Heart left ventricle (tissue), 16 donors: ENCODE measurements at regions of chr2 and their contacts with region 1.

Region 1: DNA sequence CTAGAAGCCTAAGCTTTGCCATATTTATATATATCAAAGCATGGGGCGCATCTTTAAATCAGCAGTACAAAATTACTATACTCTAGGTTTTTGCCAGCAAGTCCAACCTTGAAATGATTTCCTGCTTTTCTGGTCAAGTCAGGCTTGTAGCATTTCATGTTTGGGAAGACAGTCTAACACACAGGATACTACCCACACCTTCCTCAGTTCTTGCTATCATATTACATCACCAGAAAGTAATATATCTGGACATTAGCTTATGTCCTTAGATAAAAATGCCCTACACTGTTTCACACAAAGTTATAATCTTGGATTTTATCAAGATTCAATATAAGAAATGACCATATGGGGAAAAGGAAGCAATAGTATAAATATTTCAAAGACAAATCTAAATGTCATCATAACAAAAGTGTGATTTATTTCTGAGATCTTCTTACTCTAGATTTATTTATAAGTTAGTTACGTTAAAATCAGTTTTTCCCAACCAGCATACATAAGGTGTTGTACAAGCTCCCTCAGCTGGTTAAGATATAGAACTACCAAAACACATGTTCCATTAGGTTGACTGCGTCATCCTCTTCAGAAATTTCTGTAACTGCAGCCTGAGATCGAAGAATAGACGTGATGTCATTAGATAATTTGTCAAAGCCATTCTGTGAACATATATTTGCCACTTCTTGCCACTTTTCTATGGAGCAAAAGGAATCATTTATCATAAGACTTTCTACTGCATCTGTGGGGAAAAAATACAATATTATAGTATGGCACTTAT is 56.7 kb downstream of the CLHC1 start:
- DNase-seq: no peak
- ATAC-seq: peak; percentile 55 to 83 (median 66)
- H3K4me3 ChIP-seq: no peak overlapping the region
- H3K27ac ChIP-seq: no peak overlapping the region
- H3K4me1 ChIP-seq: peaks cover 0 to 8% (median 0%) of the 10 kb centered on the region in 12 donors
- H3K27me3 ChIP-seq: no peaks in the 10 kb centered on the region
- CTCF ChIP-seq: peak; percentile 35 to 75 (median 64)
- POLR2A ChIP-seq: no peak

Region 2: DNA sequence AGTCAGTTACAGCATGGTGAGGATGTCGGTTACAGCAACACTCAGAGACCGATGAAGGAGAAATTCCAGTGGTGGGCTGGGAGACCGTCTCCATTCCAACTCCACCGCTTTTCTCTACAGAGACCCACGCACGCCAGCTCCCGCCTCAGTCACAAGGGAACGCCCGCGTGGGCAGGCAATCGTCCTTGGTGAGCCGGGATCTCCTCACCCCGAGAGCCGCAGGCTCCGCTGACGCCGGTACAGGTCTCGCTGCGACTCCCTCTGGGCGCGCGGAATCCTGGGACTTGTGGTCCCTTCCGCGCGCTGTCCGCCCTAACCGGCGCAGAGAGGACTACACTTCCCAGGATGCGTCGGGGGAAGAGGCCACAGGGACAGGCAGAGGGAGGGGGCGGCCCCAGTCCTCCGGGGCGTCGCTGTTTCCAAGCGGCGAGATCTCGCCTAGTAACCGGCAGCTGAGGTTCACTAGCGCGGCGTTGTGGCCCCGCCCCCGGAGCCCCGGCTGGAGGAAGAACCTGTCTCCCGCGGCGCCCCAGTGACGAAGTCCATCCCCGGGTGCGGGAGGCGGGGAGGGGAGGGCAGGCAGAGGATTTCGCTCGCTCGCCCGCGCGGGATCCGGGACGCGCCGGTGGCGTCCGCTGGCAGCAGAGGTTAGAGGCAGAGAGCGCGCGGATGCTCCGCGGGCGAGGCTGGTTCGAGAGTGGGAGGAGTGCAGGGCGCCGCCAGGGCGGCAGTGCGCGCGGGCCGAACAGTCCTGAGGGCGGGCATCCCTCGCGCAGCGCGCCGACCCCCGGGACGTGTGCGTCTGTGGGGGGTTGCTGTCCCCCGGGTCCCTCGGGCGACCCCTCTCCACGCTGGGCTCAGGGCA is 452.1 kb before region 1 on chr2 and contains the start of gene EML6:
- intact Hi-C with region 1: loop called in 2 of 10 experiments (anchors 10 kb)
- DNase-seq: peak; percentile 98 to 99 (median 98)
- ATAC-seq: peak; percentile 100
- H3K4me3 ChIP-seq: peak within 1 kb of the TSS; percentile 45 to 89 (median 73)
- H3K27ac ChIP-seq: peak within 1 kb of the TSS in 11 of 12 donors; percentile 32 to 82 (median 76)
- H3K4me1 ChIP-seq: peaks cover 0 to 26% (median 9%) of the 10 kb centered on the region in 12 donors
- H3K27me3 ChIP-seq: peaks cover 0 to 18% (median 0%) of the 10 kb centered on the region in 9 donors
- CTCF ChIP-seq: peak in 7 of 12 donors; percentile 7 to 48 (median 24)
- POLR2A ChIP-seq: peak in 1 of 2 donors; percentile 82
- total RNA-seq, gene EML6: 0.08 to 1.2 (median 0.58) TPM

Region 3: GRCh38 chr2:54899576-54900200 is 275.8 kb before region 1 on chr2:
- intact Hi-C with region 1: loop called in 8 of 10 experiments (anchors 2 to 10 kb)
- DNase-seq: no peak
- ATAC-seq: peak in 3 of 4 donors; percentile 47 to 78 (median 58)
- H3K4me3 ChIP-seq: no peak overlapping the region
- H3K27ac ChIP-seq: no peak overlapping the region
- H3K4me1 ChIP-seq: peaks cover 0 to 12% (median 0%) of the 10 kb centered on the region in 12 donors
- H3K27me3 ChIP-seq: no peaks in the 10 kb centered on the region
- CTCF ChIP-seq: peak; percentile 22 to 72 (median 60)
- POLR2A ChIP-seq: no peak

Region 4: DNA sequence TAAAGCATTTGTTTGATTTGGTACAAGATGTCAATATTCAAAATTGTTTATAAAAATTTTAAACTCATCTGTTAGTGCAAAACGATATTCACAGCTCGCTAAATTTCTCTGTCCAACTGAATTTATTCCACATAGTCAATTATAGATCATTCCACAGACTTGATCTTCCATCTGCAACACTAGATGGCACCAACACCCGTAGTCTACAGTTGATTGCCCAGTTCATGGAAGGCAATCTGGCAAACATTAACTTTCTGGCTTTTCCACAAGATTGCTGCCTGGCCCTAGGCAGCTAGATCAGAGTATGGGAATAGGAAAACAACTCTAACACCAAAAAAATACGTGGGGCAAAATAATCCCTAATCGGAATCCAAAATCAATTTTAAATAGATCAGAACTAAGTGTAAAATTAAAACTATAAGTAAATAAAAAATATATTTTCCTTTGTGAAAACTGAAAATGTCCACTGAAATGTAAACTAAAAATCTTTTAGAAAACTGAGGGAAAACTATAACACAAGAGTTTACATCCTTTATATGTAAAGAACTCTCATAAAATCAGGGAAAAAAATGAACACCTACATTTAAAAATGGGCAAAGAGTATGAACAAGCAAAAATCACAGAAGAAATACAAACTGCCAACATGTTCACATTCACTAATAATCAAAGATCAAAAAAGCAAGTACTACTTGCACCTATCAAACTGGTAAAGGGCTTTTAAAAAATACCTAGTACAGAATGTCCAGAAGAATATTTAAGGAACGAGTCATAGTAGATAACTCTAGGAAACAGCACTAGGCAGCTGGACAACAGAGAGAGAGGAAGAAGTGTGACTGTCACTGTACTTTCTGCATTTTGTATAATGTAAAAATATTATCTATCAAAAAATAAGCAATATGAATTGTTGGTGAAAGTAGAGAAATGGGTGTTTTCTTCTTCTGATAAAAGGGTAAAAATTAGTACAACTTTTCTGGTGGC is 160.2 kb before region 1 on chr2:
- intact Hi-C with region 1: loop called in 4 of 10 experiments (anchors 1 to 2 kb)
- DNase-seq: peak in 3 of 5 donors; percentile 29 to 45 (median 40)
- ATAC-seq: peak; percentile 59 to 86 (median 81)
- H3K4me3 ChIP-seq: no peak overlapping the region
- H3K27ac ChIP-seq: no peak overlapping the region
- H3K4me1 ChIP-seq: peaks cover 0 to 86% (median 42%) of the 10 kb centered on the region in 12 donors
- H3K27me3 ChIP-seq: no peaks in the 10 kb centered on the region
- CTCF ChIP-seq: peak; percentile 44 to 77 (median 64)
- POLR2A ChIP-seq: no peak

Region 5: GRCh38 chr2:55364189-55365055 is 189.0 kb after region 1 on chr2:
- intact Hi-C with region 1: no loop called
- DNase-seq: peak in 2 of 5 donors; percentile 42 to 46
- ATAC-seq: peak in 3 of 4 donors; percentile 88 to 93 (median 88)
- H3K4me3 ChIP-seq: no peak overlapping the region
- H3K27ac ChIP-seq: peak overlapping the region in 5 of 12 donors; percentile 3 to 45 (median 27)
- H3K4me1 ChIP-seq: peaks cover 0 to 27% (median 1%) of the 10 kb centered on the region in 12 donors
- H3K27me3 ChIP-seq: no peaks in the 10 kb centered on the region
- CTCF ChIP-seq: no peak
- POLR2A ChIP-seq: no peak